Common myeloid progenitor, CD34-positive (primary cell): ENCODE measurements at regions of chr1 and their contacts with region 1.

Region 1: DNA sequence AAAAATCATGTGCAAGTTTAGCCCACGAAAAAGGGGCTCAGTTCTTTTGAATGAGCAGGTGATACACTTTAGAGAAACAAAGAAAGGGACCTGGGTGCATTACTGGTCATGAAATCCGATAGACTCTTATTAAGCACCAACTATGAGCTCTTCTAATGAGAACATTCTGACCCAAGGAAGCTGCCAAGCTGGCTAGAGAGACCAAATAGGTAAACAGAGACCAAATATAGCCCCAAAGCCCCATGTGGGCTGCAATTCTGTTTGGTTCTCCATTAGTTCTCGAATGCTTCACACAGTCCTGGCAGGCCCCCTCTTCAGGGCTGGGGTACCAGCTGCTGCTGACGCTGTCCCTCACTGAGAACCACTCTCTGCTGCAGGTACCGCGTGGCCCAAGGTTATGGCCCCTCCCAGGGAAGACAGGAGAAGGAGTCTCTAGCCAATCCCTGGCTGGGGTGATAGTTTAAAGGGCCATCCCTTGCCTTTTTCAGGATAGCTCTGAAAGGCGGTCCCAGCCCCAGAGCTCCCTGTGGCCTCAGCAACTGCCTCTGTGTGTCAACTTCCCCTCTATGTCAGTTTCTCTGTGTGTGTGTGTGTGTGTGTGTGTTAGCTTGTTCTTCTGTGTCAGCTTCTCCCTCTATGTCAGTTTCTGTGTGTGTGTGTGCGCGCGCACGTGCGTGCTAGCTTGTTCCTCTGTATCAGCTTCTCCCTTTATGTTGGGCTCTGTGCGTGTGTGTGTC is 7.1 kb upstream of the UBXN10 start:
- DNase-seq: peak in 1 of 3 donors; percentile 46
- H3K4me3 ChIP-seq: no peak overlapping the region
- H3K27ac ChIP-seq: no peak overlapping the region
- H3K4me1 ChIP-seq: no peaks in the 10 kb centered on the region
- H3K27me3 ChIP-seq: peaks cover 0 to 35% (median 8%) of the 10 kb centered on the region in 5 experiments

Region 2: DNA sequence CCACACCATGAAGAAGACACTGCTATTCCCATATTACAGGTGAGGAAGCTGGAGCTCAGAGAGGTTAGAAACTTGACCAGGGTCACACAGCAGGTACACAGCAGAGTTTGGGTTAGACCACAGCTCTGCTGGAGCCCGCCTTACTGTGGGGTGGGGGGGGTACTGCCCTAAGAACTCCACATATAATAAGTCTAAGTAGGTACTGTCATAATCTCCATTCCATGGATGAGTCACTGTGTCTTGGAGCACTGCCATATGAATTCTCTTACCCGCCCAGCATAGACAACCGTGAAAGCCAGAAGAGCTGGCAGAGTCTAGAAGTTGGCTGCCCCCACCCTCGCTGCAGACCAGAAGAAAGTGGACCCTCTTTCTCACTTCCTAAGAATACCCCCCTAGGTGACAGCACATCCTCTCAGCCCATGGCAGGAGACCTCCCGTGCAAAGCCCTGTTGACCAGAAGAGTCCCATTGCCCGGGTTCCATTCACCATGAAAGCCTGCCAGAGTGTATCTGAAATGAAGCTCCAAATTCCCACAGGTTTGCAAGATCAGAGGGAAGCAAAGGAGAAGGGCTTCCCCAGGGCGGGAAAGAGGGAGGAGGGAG is 54.2 kb before region 1 on chr1:
- CTCF ChIA-PET with region 1: no interaction called
- POLR2A ChIA-PET with region 1: no interaction called
- DNase-seq: peak in 2 of 3 donors; percentile 29 to 39
- H3K4me3 ChIP-seq: no peak overlapping the region
- H3K27ac ChIP-seq: no peak overlapping the region
- H3K4me1 ChIP-seq: peaks cover 0 to 2% (median 0%) of the 10 kb centered on the region in 4 experiments
- H3K27me3 ChIP-seq: peaks cover 0 to 33% (median 8%) of the 10 kb centered on the region in 5 experiments

Region 3: GRCh38 chr1:20137043-20137442 is 41.8 kb before region 1 on chr1:
- CTCF ChIA-PET with region 1: no interaction called
- POLR2A ChIA-PET with region 1: no interaction called
- DNase-seq: no peak
- H3K4me3 ChIP-seq: no peak overlapping the region
- H3K27ac ChIP-seq: no peak overlapping the region
- H3K4me1 ChIP-seq: no peaks in the 10 kb centered on the region
- H3K27me3 ChIP-seq: peaks cover 0 to 3% (median 2%) of the 10 kb centered on the region in 5 experiments

Region 4: GRCh38 chr1:20151906-20152598 is 26.8 kb before region 1 on chr1:
- CTCF ChIA-PET with region 1: interaction called, 11 read pairs
- POLR2A ChIA-PET with region 1: no interaction called
- DNase-seq: peak; percentile 60 to 71 (median 69)
- H3K4me3 ChIP-seq: peak overlapping the region in 5 of 7 experiments; percentile 25 to 75 (median 57)
- H3K27ac ChIP-seq: no peak overlapping the region
- H3K4me1 ChIP-seq: peaks cover 0 to 24% (median 13%) of the 10 kb centered on the region in 4 experiments
- H3K27me3 ChIP-seq: peaks cover 0 to 7% (median 0%) of the 10 kb centered on the region in 5 experiments

Region 5: GRCh38 chr1:20194757-20195461 is 16.1 kb after region 1 on chr1:
- CTCF ChIA-PET with region 1: interaction called, 11 read pairs
- POLR2A ChIA-PET with region 1: no interaction called
- DNase-seq: peak; percentile 52 to 76 (median 68)
- H3K4me3 ChIP-seq: no peak overlapping the region
- H3K27ac ChIP-seq: no peak overlapping the region
- H3K4me1 ChIP-seq: no peaks in the 10 kb centered on the region
- H3K27me3 ChIP-seq: peaks cover 0 to 77% (median 22%) of the 10 kb centered on the region in 5 experiments

Region 6: GRCh38 chr1:20271498-20272400 is 92.9 kb after region 1 on chr1:
- CTCF ChIA-PET with region 1: no interaction called
- POLR2A ChIA-PET with region 1: no interaction called
- DNase-seq: no peak
- H3K4me3 ChIP-seq: no peak overlapping the region
- H3K27ac ChIP-seq: no peak overlapping the region
- H3K4me1 ChIP-seq: no peaks in the 10 kb centered on the region
- H3K27me3 ChIP-seq: peaks cover 0 to 38% (median 3%) of the 10 kb centered on the region in 5 experiments

Region 7: GRCh38 chr1:20329793-20330542 is 151.2 kb after region 1 on chr1:
- CTCF ChIA-PET with region 1: no interaction called
- POLR2A ChIA-PET with region 1: no interaction called
- DNase-seq: no peak
- H3K4me3 ChIP-seq: no peak overlapping the region
- H3K27ac ChIP-seq: no peak overlapping the region
- H3K4me1 ChIP-seq: no peaks in the 10 kb centered on the region
- H3K27me3 ChIP-seq: peaks cover 0 to 48% (median 9%) of the 10 kb centered on the region in 5 experiments